ENCODE measurements at regions of chr4 and their contacts with region 1.

Region 1: GRCh38 chr4:168831919-168832762 is 177.9 kb downstream of the CBR4 start:
- DNase-seq: peak; percentile 86
- H3K4me3 ChIP-seq: peak overlapping the region; percentile 88 to 95 (median 95)
- H3K27ac ChIP-seq: peak overlapping the region; percentile 84
- H3K4me1 ChIP-seq: peaks cover 37% of the 10 kb centered on the region
- H3K27me3 ChIP-seq: no peaks in the 10 kb centered on the region
- CTCF ChIP-seq: no peak

Region 2: GRCh38 chr4:168631241-168632162 is 200.6 kb before region 1 on chr4:
- CTCF ChIA-PET with region 1: no interaction called
- dilution Hi-C with region 1: no loop called
- in situ Hi-C with region 1: no loop called
- intact Hi-C with region 1: loop called (anchors 5 kb)
- DNase-seq: peak; percentile 80
- H3K4me3 ChIP-seq: peak overlapping the region; percentile 56 to 62 (median 61)
- H3K27ac ChIP-seq: peak overlapping the region; percentile 66
- H3K4me1 ChIP-seq: peaks cover 48% of the 10 kb centered on the region
- H3K27me3 ChIP-seq: no peaks in the 10 kb centered on the region
- CTCF ChIP-seq: peak; percentile 19 to 53

Region 3: GRCh38 chr4:168723020-168723419 is 109.1 kb before region 1 on chr4:
- CTCF ChIA-PET with region 1: no interaction called
- dilution Hi-C with region 1: no loop called
- in situ Hi-C with region 1: loop called in 1 of 2 experiments (anchors 10 kb)
- intact Hi-C with region 1: no loop called
- DNase-seq: no peak
- H3K4me3 ChIP-seq: no peak overlapping the region
- H3K27ac ChIP-seq: no peak overlapping the region
- H3K4me1 ChIP-seq: peaks cover 17% of the 10 kb centered on the region
- H3K27me3 ChIP-seq: no peaks in the 10 kb centered on the region
- CTCF ChIP-seq: no peak

Region 4: GRCh38 chr4:168784786-168785461 is 47.2 kb before region 1 on chr4:
- CTCF ChIA-PET with region 1: interaction called, 17 read pairs
- dilution Hi-C with region 1: no loop called
- in situ Hi-C with region 1: no loop called
- intact Hi-C with region 1: loop called (anchors 2 kb)
- DNase-seq: peak; percentile 95
- H3K4me3 ChIP-seq: peak overlapping the region; percentile 8 to 17 (median 12)
- H3K27ac ChIP-seq: peak overlapping the region; percentile 91
- H3K4me1 ChIP-seq: peaks cover 25% of the 10 kb centered on the region
- H3K27me3 ChIP-seq: no peaks in the 10 kb centered on the region
- CTCF ChIP-seq: no peak

Region 5: GRCh38 chr4:168877511-168878491 is 45.7 kb after region 1 on chr4:
- CTCF ChIA-PET with region 1: no interaction called
- dilution Hi-C with region 1: no loop called
- in situ Hi-C with region 1: no loop called
- intact Hi-C with region 1: loop called (anchors 5 kb)
- DNase-seq: peak; percentile 48
- H3K4me3 ChIP-seq: no peak overlapping the region
- H3K27ac ChIP-seq: no peak overlapping the region
- H3K4me1 ChIP-seq: peaks cover 26% of the 10 kb centered on the region
- H3K27me3 ChIP-seq: no peaks in the 10 kb centered on the region
- CTCF ChIP-seq: no peak

Region 6: GRCh38 chr4:168907119-168907698 is 75.1 kb after region 1 on chr4:
- CTCF ChIA-PET with region 1: no interaction called
- dilution Hi-C with region 1: no loop called
- in situ Hi-C with region 1: no loop called
- intact Hi-C with region 1: no loop called
- DNase-seq: no peak
- H3K4me3 ChIP-seq: no peak overlapping the region
- H3K27ac ChIP-seq: no peak overlapping the region
- H3K4me1 ChIP-seq: peaks cover 7% of the 10 kb centered on the region
- H3K27me3 ChIP-seq: no peaks in the 10 kb centered on the region
- CTCF ChIP-seq: no peak

Region 7: GRCh38 chr4:169372791-169373190 is 540.6 kb after region 1 on chr4:
- CTCF ChIA-PET with region 1: no interaction called
- dilution Hi-C with region 1: no loop called
- in situ Hi-C with region 1: no loop called
- intact Hi-C with region 1: no loop called
- DNase-seq: peak; percentile 29
- H3K4me3 ChIP-seq: no peak overlapping the region
- H3K27ac ChIP-seq: no peak overlapping the region
- H3K4me1 ChIP-seq: no peaks in the 10 kb centered on the region
- H3K27me3 ChIP-seq: no peaks in the 10 kb centered on the region
- CTCF ChIP-seq: no peak

Measured in mammary epithelial cell (primary cell).